ENCODE measurements at regions of chr19 and their contacts with region 1.

Region 1: DNA sequence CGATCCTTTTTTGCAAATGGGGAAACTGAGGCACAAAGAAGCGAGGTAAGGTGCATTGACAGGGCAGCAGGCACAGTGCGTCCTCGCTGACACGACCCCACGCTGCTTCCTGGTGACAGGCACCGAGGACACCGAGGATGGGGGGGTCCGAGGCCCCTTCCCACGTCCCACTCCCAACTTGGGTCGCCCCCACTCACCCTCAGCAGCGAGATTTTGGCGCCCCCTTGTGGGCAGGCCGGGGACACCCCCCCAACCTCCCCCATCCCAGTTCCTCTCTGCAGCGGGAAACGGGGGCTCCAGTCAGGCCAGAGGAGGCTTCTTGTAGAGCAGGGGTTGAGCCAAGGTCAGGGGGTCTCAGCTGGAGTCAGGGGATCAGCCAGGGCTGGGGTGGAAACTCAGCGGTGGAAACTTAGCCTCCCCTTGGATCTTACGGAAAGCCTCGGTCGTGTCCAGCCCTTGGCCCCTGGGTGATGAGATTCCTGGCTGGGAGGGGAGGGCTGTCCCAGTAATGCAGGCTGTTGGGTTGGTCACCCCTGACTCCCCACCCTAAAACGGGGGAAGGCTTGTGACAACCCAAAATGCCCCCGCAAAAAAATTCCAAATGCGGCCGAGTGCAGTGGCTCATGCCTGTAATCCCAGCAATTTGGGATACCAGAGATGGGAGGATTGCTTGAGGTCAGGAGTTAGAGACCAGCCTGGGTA is 8.2 kb downstream of the SMIM24 start:
- DNase-seq: no peak
- H3K4me3 ChIP-seq: no peak overlapping the region
- H3K27me3 ChIP-seq: no peaks in the 10 kb centered on the region
- CTCF ChIP-seq: peak; percentile 95

Region 2: DNA sequence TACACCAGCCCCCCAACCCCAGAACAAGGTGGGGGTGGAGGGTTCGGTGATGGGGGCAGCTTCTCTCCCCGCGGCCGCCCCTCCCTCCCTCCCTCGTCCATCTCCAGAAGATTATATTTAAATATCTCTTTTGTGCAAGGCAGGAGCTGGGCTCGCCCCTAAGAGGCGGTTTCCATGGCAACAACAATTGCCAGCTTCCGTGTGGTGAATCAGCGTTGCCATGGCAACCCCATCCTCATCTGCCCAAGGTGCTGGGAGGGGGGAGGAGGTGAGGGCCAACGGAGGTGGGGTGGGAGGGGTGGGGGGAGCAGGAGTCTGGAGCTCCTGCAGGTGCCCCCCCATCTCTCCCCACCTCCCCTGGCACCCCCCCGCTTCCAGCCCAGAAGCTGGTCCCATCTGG is 201.2 kb before region 1 on chr19:
- CTCF ChIA-PET with region 1: no interaction called
- POLR2A ChIA-PET with region 1: no interaction called
- DNase-seq: no peak
- H3K4me3 ChIP-seq: no peak overlapping the region
- H3K27me3 ChIP-seq: peaks cover 24% of the 10 kb centered on the region
- CTCF ChIP-seq: no peak

Region 3: DNA sequence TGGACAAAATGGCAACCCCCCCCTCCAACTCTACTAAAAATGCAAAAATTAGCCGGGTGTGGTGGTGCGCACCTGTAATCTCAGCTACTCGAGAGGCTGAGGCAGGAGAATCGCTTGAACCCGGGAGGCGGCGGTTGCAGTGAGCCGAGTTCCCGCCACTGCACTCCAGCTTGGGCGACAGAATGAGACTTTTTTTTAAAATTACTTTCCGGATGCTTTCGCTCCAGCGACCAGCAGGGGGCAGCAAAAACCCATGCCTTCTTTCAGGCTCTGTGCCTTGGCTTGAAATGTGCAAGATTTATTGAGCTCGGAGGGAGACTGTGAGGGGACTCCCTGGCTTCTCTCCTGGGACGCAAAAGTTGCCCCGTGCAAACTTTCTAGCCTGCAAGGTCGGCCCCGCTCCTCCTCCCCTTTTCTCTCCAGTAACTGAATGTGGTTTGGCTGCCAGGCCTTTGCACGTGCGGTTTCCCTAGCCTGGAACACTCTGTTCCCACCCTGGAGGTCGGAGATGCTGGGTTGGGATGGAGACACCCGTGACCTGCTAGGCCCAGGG is 167.2 kb before region 1 on chr19:
- CTCF ChIA-PET with region 1: interaction called, 26 read pairs
- POLR2A ChIA-PET with region 1: no interaction called
- DNase-seq: no peak
- H3K4me3 ChIP-seq: no peak overlapping the region
- H3K27me3 ChIP-seq: peaks cover 6% of the 10 kb centered on the region
- CTCF ChIP-seq: peak; percentile 87

Region 4: GRCh38 chr19:3324321-3324856 is 147.7 kb before region 1 on chr19:
- CTCF ChIA-PET with region 1: interaction called, 62 read pairs
- POLR2A ChIA-PET with region 1: no interaction called
- DNase-seq: no peak
- H3K4me3 ChIP-seq: no peak overlapping the region
- H3K27me3 ChIP-seq: peaks cover 6% of the 10 kb centered on the region; the same call in 1 of the 2 replicates
- CTCF ChIP-seq: peak; percentile 83

Region 5: GRCh38 chr19:3330047-3330446 is 142.1 kb before region 1 on chr19:
- CTCF ChIA-PET with region 1: interaction called, 62 read pairs
- POLR2A ChIA-PET with region 1: no interaction called
- DNase-seq: no peak
- H3K4me3 ChIP-seq: no peak overlapping the region
- H3K27me3 ChIP-seq: no peaks in the 10 kb centered on the region
- CTCF ChIP-seq: no peak

Region 6: DNA sequence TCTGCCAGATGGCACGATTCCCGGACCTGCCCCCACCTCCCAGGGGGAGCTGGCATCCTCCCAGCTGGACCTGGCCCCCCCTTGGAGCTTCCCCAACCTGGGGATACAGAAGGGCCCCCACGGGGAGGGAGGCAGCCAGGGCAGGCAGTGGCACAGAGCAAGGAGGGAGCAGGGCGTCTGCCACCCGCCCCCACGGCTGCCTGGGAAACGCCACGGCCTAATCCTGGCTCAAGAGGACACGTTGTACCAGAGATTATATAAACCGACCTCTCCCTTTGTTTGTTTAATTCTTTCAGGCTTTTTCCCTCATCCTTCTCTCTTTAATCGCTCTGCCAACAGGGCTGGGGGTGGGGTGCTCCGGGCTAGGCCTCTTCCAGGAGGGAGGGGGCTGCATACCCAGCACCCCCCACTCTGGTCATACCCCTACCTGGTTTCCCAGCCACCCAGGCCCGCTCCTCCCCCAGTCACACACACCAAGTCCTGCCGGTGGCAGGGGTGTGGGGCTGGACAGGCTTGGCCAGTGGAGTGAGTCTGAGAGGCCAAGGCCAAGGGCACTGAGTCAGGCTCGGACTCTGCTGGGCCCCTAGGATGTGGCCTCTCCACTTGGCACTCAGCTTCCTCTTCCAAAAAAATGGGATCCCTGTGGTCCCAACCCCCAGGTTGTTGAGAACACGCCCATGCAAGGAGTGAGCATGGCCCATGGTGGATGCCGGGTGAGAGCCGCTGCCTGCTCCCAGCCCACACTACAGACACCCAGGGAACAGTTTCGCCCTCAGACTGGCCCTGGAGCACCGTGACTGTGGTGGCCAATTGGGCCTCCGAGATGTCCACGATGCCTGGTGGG is 135.2 kb before region 1 on chr19:
- CTCF ChIA-PET with region 1: interaction called, 30 read pairs
- POLR2A ChIA-PET with region 1: no interaction called
- DNase-seq: no peak
- H3K4me3 ChIP-seq: no peak overlapping the region
- H3K27me3 ChIP-seq: no peaks in the 10 kb centered on the region
- CTCF ChIP-seq: no peak